Left lung (tissue), 14 donors: ENCODE measurements at regions of chr5 and their contacts with region 1.

Region 1: GRCh38 chr5:66757188-66757833 is 161.1 kb downstream of the MAST4 start:
- DNase-seq: peak in 2 of 4 donors; percentile 61 to 84
- ATAC-seq: peak; percentile 94
- H3K4me3 ChIP-seq: no peak overlapping the region
- H3K27ac ChIP-seq: peak overlapping the region; percentile 28 to 46
- H3K4me1 ChIP-seq: peaks cover 0 to 7% of the 10 kb centered on the region in 2 donors
- H3K27me3 ChIP-seq: peaks cover 0 to 9% of the 10 kb centered on the region in 2 donors
- CTCF ChIP-seq: no peak

Region 2: GRCh38 chr5:66306105-66306843 is 451.0 kb before region 1 on chr5:
- intact Hi-C with region 1: loop called in 1 of 2 experiments (anchors 5 kb)
- DNase-seq: peak in 2 of 4 donors; percentile 64 to 77
- ATAC-seq: peak; percentile 96
- H3K4me3 ChIP-seq: no peak overlapping the region
- H3K27ac ChIP-seq: no peak overlapping the region
- H3K4me1 ChIP-seq: peaks cover 0 to 6% of the 10 kb centered on the region in 2 donors
- H3K27me3 ChIP-seq: no peaks in the 10 kb centered on the region
- CTCF ChIP-seq: peak; percentile 80 to 82